ENCODE measurements at regions of chr1 and their contacts with region 1.

Region 1: DNA sequence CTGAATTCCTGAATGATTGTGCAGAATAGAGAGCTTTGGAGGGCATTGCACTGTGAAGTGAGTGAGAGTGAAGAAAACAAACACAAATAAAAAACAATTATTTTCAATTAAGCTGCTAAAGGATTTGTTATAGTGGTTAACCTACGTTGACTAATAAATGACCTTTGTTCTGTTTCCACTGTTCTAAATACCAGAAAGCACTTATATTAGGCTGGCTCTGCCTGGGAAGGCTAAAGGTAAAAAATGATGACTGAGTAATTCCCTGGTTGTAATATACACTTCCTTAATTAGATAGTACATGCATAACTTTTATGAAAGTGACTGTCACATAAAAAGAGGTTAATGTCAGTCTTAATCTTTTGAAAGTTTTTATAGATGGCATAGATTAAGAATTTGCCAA is 1661.0 kb downstream of the PLA2G4A start:
- DNase-seq: peak; percentile 46
- ATAC-seq: peak; percentile 74
- H3K4me3 ChIP-seq: no peak overlapping the region
- H3K27ac ChIP-seq: peak overlapping the region; percentile 56
- H3K4me1 ChIP-seq: peaks cover 24% of the 10 kb centered on the region
- H3K27me3 ChIP-seq: no peaks in the 10 kb centered on the region
- CTCF ChIP-seq: no peak; the same call in 1 of the 2 replicates

Region 2: GRCh38 chr1:188476606-188477005 is 13.1 kb before region 1 on chr1:
- CTCF ChIA-PET with region 1: no interaction called
- POLR2A ChIA-PET with region 1: no interaction called
- intact Hi-C with region 1: no loop called
- DNase-seq: no peak
- ATAC-seq: no peak
- H3K4me3 ChIP-seq: no peak overlapping the region
- H3K27ac ChIP-seq: no peak overlapping the region
- H3K4me1 ChIP-seq: no peaks in the 10 kb centered on the region
- H3K27me3 ChIP-seq: no peaks in the 10 kb centered on the region
- CTCF ChIP-seq: no peak

Region 3: GRCh38 chr1:188782219-188782841 is 292.6 kb after region 1 on chr1:
- CTCF ChIA-PET with region 1: no interaction called
- POLR2A ChIA-PET with region 1: no interaction called
- intact Hi-C with region 1: loop called (anchors 10 kb)
- DNase-seq: peak; percentile 55
- ATAC-seq: peak; percentile 88
- H3K4me3 ChIP-seq: no peak overlapping the region
- H3K27ac ChIP-seq: no peak overlapping the region
- H3K4me1 ChIP-seq: peaks cover 7% of the 10 kb centered on the region; the same call in 1 of the 2 replicates
- H3K27me3 ChIP-seq: no peaks in the 10 kb centered on the region
- CTCF ChIP-seq: peak; percentile 69